ENCODE measurements at regions of chr10 and their contacts with region 1.

Region 1: DNA sequence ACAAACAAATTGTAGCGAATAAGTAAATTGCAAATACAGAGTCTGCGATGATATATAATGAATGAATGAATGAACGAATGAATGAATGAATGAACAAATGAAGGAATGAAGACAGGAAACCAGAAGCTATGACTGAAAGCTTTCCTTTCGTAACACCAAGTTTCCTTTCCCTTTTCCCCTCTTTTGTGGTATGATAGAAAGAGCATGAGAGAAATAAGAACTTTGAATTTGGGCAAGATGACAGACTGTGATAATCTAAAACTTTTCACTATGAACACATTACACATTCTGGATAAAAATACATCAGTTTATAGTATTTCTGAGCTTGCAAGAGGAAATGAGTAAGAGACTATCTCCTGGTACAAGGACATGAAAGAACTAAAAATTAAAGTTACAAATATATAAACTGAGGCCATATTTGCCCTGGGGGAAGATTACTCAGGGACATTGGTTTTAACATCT is 8.4 kb upstream of the UCN3 start:
- DNase-seq: no peak
- H3K4me3 Mint-ChIP-seq: no peak overlapping the region
- H3K27ac Mint-ChIP-seq: no peak overlapping the region
- H3K4me1 Mint-ChIP-seq: peaks cover 14% of the 10 kb centered on the region
- H3K27me3 Mint-ChIP-seq: peaks cover 4% of the 10 kb centered on the region

Region 2: DNA sequence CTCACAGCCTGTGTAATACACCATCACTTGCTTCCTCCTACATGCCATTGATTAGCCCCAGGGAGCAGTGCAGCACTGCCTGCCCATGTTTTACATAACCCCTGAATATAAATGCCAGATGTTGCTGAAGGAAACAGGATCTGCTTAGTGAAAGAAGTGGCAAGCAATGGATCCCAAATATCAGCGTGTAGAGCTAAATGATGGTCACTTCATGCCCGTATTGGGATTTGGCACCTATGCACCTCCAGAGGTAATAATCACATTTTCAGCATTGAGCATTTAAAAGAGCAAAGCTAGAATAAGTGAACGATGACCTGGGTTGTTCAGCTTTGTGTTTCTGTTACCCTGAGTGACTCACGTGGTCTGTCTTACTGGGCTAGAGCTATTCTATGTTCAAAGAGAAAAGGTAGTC is 159.6 kb before region 1 on chr10 and contains the start of gene AKR1C4:
- CTCF ChIA-PET with region 1: no interaction called
- POLR2A ChIA-PET with region 1: no interaction called
- intact Hi-C with region 1: no loop called
- DNase-seq: no peak
- H3K4me3 Mint-ChIP-seq: no peak within 1 kb of the TSS
- H3K27ac Mint-ChIP-seq: no peak within 1 kb of the TSS
- H3K4me1 Mint-ChIP-seq: no peaks in the 10 kb centered on the region
- H3K27me3 Mint-ChIP-seq: no peaks in the 10 kb centered on the region
- total RNA-seq, gene AKR1C4: not detected

Region 3: GRCh38 chr10:5317547-5318107 is 38.7 kb before region 1 on chr10:
- CTCF ChIA-PET with region 1: no interaction called
- POLR2A ChIA-PET with region 1: interaction called, 6 read pairs
- intact Hi-C with region 1: loop called (anchors 1 kb)
- DNase-seq: peak; percentile 94
- H3K4me3 Mint-ChIP-seq: peak overlapping the region; percentile 55
- H3K27ac Mint-ChIP-seq: peak overlapping the region; percentile 92
- H3K4me1 Mint-ChIP-seq: peaks cover 76% of the 10 kb centered on the region
- H3K27me3 Mint-ChIP-seq: no peaks in the 10 kb centered on the region

Region 4: GRCh38 chr10:5376450-5376849 is 20.1 kb after region 1 on chr10:
- CTCF ChIA-PET with region 1: no interaction called
- POLR2A ChIA-PET with region 1: no interaction called
- intact Hi-C with region 1: no loop called
- DNase-seq: no peak
- H3K4me3 Mint-ChIP-seq: no peak overlapping the region
- H3K27ac Mint-ChIP-seq: no peak overlapping the region
- H3K4me1 Mint-ChIP-seq: no peaks in the 10 kb centered on the region
- H3K27me3 Mint-ChIP-seq: peaks cover 5% of the 10 kb centered on the region